HCT116 (cell line): ENCODE measurements at regions of chr4 and their contacts with region 1.

Region 1: DNA sequence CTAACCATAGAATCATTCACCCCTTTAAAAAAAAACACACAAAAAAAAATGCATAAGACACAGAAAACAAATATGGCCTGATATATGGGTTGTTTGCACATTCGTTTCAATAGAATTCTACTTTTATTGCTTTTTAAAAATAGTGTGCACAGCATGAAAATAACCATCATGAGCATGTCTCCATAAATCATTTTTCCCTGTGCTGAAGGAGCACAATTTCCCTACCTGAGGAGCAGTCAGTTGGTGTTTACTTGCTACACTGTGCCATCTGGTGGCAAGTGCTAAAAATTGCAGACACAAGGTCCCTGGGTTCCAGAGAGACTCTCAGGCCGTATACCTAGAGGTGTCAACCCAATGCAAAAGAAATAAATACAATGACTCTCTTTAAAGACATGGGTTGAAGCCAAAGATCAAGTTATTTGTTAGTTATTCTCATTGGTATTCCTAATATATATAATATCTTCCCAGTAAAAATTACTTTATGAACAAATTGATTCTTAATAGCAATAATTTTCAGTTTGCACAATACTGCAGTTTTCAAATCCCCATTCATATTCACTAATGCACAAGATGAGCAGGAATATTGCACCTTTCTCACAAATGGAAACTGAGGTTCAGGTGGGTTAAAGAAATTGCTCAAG is 551.4 kb downstream of the IQCM start:
- DNase-seq: peak; percentile 48
- ATAC-seq: peak; percentile 95
- H3K4me3 ChIP-seq: no peak overlapping the region
- H3K27ac ChIP-seq: no peak overlapping the region
- H3K4me1 ChIP-seq: no peaks in the 10 kb centered on the region
- H3K27me3 ChIP-seq: no peaks in the 10 kb centered on the region
- CTCF ChIP-seq: peak; percentile 53 to 73 (median 63); a peak in 5 of 6 replicates
- POLR2A ChIP-seq: no peak
- RAD21 ChIP-seq: peak; percentile 80

Region 2: GRCh38 chr4:147924604-147925412 is 1339.4 kb before region 1 on chr4:
- CTCF ChIA-PET with region 1: no interaction called
- POLR2A ChIA-PET with region 1: no interaction called
- RAD21 ChIA-PET with region 1: no interaction called
- intact Hi-C with region 1: loop called (anchors 10 kb)
- DNase-seq: no peak
- ATAC-seq: peak; percentile 77
- H3K4me3 ChIP-seq: no peak overlapping the region
- H3K27ac ChIP-seq: no peak overlapping the region
- H3K4me1 ChIP-seq: no peaks in the 10 kb centered on the region
- H3K27me3 ChIP-seq: no peaks in the 10 kb centered on the region
- CTCF ChIP-seq: peak; percentile 25 to 46 (median 46); a peak in 3 of 6 replicates
- POLR2A ChIP-seq: no peak
- RAD21 ChIP-seq: peak; percentile 41; the same call in 1 of the 2 replicates

Region 3: GRCh38 chr4:148283665-148284064 is 980.5 kb before region 1 on chr4:
- CTCF ChIA-PET with region 1: no interaction called
- POLR2A ChIA-PET with region 1: no interaction called
- RAD21 ChIA-PET with region 1: no interaction called
- intact Hi-C with region 1: loop called (anchors 5 kb)
- DNase-seq: no peak
- ATAC-seq: no peak
- H3K4me3 ChIP-seq: no peak overlapping the region
- H3K27ac ChIP-seq: no peak overlapping the region
- H3K4me1 ChIP-seq: no peaks in the 10 kb centered on the region
- H3K27me3 ChIP-seq: no peaks in the 10 kb centered on the region
- CTCF ChIP-seq: no peak
- POLR2A ChIP-seq: no peak
- RAD21 ChIP-seq: no peak

Region 4: DNA sequence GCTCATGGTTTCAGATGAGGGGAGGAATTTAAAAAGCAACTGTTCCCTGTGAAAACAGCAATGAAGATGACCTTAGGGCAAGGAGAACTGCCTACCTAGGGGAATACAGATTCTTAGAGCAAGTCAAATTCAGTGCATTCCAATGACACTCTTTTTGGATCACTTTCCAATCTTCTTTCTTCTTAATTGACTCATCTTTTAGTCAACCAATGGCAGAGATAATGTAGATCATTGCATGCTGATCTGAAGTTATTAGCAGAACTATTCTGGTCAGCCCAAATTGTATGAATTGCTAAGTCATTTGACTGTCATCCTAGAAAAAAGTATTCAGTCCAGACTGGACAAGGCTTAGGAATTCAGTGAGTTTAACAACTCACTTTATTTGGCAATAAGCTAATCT is 809.4 kb before region 1 on chr4:
- CTCF ChIA-PET with region 1: no interaction called
- POLR2A ChIA-PET with region 1: no interaction called
- RAD21 ChIA-PET with region 1: no interaction called
- intact Hi-C with region 1: loop called (anchors 10 kb)
- DNase-seq: no peak
- ATAC-seq: no peak
- H3K4me3 ChIP-seq: no peak overlapping the region
- H3K27ac ChIP-seq: no peak overlapping the region
- H3K4me1 ChIP-seq: no peaks in the 10 kb centered on the region
- H3K27me3 ChIP-seq: no peaks in the 10 kb centered on the region
- CTCF ChIP-seq: no peak
- POLR2A ChIP-seq: no peak
- RAD21 ChIP-seq: no peak

Region 5: DNA sequence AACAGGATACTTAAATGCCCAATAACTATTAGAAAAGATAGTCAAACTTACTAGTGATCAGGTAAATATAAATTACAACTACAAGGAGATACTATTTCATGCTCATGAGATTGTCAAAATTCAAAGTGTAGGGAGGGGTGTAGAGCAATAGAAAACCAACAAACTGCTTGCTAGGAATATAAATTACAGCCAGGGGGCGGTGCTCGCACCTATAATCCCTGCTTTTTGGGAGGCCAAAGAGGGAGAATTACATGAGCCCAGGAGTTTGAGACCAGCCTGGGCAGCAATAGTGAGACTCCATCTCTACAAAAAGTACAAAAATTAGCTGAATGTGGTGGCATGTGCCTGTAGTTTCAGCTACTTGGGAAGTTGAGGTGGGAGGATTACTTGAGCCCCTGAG is 265.5 kb before region 1 on chr4:
- CTCF ChIA-PET with region 1: no interaction called
- POLR2A ChIA-PET with region 1: no interaction called
- RAD21 ChIA-PET with region 1: no interaction called
- intact Hi-C with region 1: loop called (anchors 5 kb)
- DNase-seq: peak; percentile 24
- ATAC-seq: peak; percentile 85
- H3K4me3 ChIP-seq: no peak overlapping the region
- H3K27ac ChIP-seq: no peak overlapping the region
- H3K4me1 ChIP-seq: no peaks in the 10 kb centered on the region
- H3K27me3 ChIP-seq: no peaks in the 10 kb centered on the region
- CTCF ChIP-seq: peak; percentile 25 to 74 (median 53); a peak in 5 of 6 replicates
- POLR2A ChIP-seq: no peak
- RAD21 ChIP-seq: peak; percentile 69

Region 6: GRCh38 chr4:149897783-149898182 is 633.6 kb after region 1 on chr4:
- CTCF ChIA-PET with region 1: interaction called, 5 read pairs
- POLR2A ChIA-PET with region 1: no interaction called
- RAD21 ChIA-PET with region 1: no interaction called
- intact Hi-C with region 1: loop called (anchors 2 kb)
- DNase-seq: peak; percentile 22
- ATAC-seq: peak; percentile 74
- H3K4me3 ChIP-seq: no peak overlapping the region
- H3K27ac ChIP-seq: no peak overlapping the region
- H3K4me1 ChIP-seq: no peaks in the 10 kb centered on the region
- H3K27me3 ChIP-seq: no peaks in the 10 kb centered on the region
- CTCF ChIP-seq: peak in 2 of 3 experiments; percentile 55 to 58; a peak in 3 of 6 replicates
- POLR2A ChIP-seq: no peak
- RAD21 ChIP-seq: peak; percentile 81